Ascending aorta (tissue), 2 donors: ENCODE measurements at regions of chr14 and their contacts with region 1.

Region 1: DNA sequence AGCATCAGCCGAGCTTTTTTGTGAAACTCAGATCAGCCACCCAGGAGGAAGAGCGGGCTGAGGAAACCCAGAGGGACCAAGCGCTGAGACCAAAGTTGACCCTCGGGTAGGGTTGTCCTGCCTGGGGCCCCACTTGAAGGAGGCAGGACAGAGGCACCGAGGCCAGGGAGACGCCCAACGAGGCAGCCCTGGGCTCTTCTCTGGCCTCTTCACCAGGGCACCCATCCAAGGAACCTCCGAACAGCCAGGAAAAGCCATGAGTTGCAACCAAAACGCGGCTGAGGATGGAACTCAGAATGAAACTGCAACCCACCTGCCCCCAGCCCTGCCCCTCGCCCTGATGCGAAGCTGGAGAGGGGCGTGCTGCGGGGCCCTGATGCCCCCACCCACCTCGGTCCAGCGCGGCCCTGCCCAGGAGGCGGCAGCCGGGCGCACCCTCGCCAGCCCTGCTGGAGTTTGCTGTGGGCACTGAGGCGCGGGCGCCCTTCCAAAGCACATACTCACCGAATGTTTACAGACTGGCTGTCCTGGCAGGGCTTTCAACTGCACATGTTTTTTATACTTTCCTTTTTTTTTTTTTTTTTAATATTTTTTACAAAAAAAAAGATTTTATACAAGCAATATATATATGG is 41.9 kb downstream of the JDP2 start:
- DNase-seq: peak in 1 of 2 donors; percentile 86
- H3K4me3 ChIP-seq: peak overlapping the region in 1 of 2 donors; percentile 26
- H3K27ac ChIP-seq: peak overlapping the region; percentile 46 to 64
- H3K4me1 ChIP-seq: peaks cover 5 to 26% of the 10 kb centered on the region in 2 donors
- H3K27me3 ChIP-seq: no peaks in the 10 kb centered on the region
- CTCF ChIP-seq: peak in 1 of 3 experiments; percentile 25

Region 2: GRCh38 chr14:75452900-75453747 is 16.6 kb before region 1 on chr14:
- intact Hi-C with region 1: loop called (anchors 2 kb)
- DNase-seq: peak in 1 of 2 donors; percentile 81
- H3K4me3 ChIP-seq: peak overlapping the region in 1 of 2 donors; percentile 8
- H3K27ac ChIP-seq: peak overlapping the region; percentile 69 to 85
- H3K4me1 ChIP-seq: peaks cover 40 to 78% of the 10 kb centered on the region in 2 donors
- H3K27me3 ChIP-seq: no peaks in the 10 kb centered on the region
- CTCF ChIP-seq: no peak